WTC11 (cell line): ENCODE measurements at regions of chr10 and their contacts with region 1.

Region 1: GRCh38 chr10:52004342-52004949 is 305.1 kb upstream of the CSTF2T start:
- DNase-seq: no peak
- ATAC-seq: peak; percentile 78
- H3K4me3 Mint-ChIP-seq: no peak overlapping the region
- H3K27ac Mint-ChIP-seq: no peak overlapping the region
- H3K4me1 Mint-ChIP-seq: peaks cover 3% of the 10 kb centered on the region; the same call in 1 of the 2 replicates
- H3K27me3 Mint-ChIP-seq: no peaks in the 10 kb centered on the region
- CTCF ChIP-seq: peak; percentile 53

Region 2: GRCh38 chr10:51389415-51390321 is 614.8 kb before region 1 on chr10:
- CTCF ChIA-PET with region 1: interaction called, 19 read pairs
- POLR2A ChIA-PET with region 1: no interaction called
- DNase-seq: peak; percentile 75
- ATAC-seq: peak; percentile 92
- H3K4me3 Mint-ChIP-seq: no peak overlapping the region
- H3K27ac Mint-ChIP-seq: no peak overlapping the region
- H3K4me1 Mint-ChIP-seq: peaks cover 2% of the 10 kb centered on the region; the same call in 1 of the 2 replicates
- H3K27me3 Mint-ChIP-seq: no peaks in the 10 kb centered on the region
- CTCF ChIP-seq: peak; percentile 92

Region 3: GRCh38 chr10:51961401-51961800 is 43.0 kb before region 1 on chr10:
- CTCF ChIA-PET with region 1: interaction called, 14 read pairs
- POLR2A ChIA-PET with region 1: no interaction called
- DNase-seq: no peak
- ATAC-seq: no peak
- H3K4me3 Mint-ChIP-seq: no peak overlapping the region
- H3K27ac Mint-ChIP-seq: no peak overlapping the region
- H3K4me1 Mint-ChIP-seq: peaks cover 35% of the 10 kb centered on the region
- H3K27me3 Mint-ChIP-seq: peaks cover 2% of the 10 kb centered on the region; the same call in 1 of the 2 replicates
- CTCF ChIP-seq: no peak

Region 4: GRCh38 chr10:51993475-51993874 is 11.0 kb before region 1 on chr10:
- CTCF ChIA-PET with region 1: interaction called, 20 read pairs
- POLR2A ChIA-PET with region 1: no interaction called
- DNase-seq: no peak
- ATAC-seq: no peak
- H3K4me3 Mint-ChIP-seq: no peak overlapping the region
- H3K27ac Mint-ChIP-seq: no peak overlapping the region
- H3K4me1 Mint-ChIP-seq: peaks cover 21% of the 10 kb centered on the region
- H3K27me3 Mint-ChIP-seq: no peaks in the 10 kb centered on the region
- CTCF ChIP-seq: no peak